ENCODE measurements at regions of chr1 and their contacts with region 1.

Region 1: GRCh38 chr1:150760013-150760412 is 5.6 kb downstream of the CTSS start:
- DNase-seq: peak; percentile 55
- ATAC-seq: peak; percentile 60
- H3K4me3 ChIP-seq: peak overlapping the region in 1 of 5 experiments; percentile 6
- H3K4me3 Mint-ChIP-seq: peak overlapping the region; percentile 59
- H3K27ac ChIP-seq: peak overlapping the region in 1 of 2 donors; percentile 77
- H3K27ac Mint-ChIP-seq: peak overlapping the region; percentile 64
- H3K4me1 ChIP-seq: peaks cover 38 to 43% of the 10 kb centered on the region in 2 donors
- H3K4me1 Mint-ChIP-seq: peaks cover 43% of the 10 kb centered on the region
- H3K27me3 ChIP-seq: no peaks in the 10 kb centered on the region
- H3K27me3 Mint-ChIP-seq: no peaks in the 10 kb centered on the region
- CTCF ChIP-seq: no peak

Region 2: GRCh38 chr1:150718225-150718891 is 41.7 kb before region 1 on chr1:
- CTCF ChIA-PET with region 1: no interaction called
- POLR2A ChIA-PET with region 1: no interaction called
- intact Hi-C with region 1: no loop called
- DNase-seq: no peak
- ATAC-seq: no peak
- H3K4me3 ChIP-seq: no peak overlapping the region
- H3K4me3 Mint-ChIP-seq: no peak overlapping the region
- H3K27ac ChIP-seq: no peak overlapping the region
- H3K27ac Mint-ChIP-seq: no peak overlapping the region
- H3K4me1 ChIP-seq: no peaks in the 10 kb centered on the region
- H3K4me1 Mint-ChIP-seq: no peaks in the 10 kb centered on the region
- H3K27me3 ChIP-seq: no peaks in the 10 kb centered on the region
- H3K27me3 Mint-ChIP-seq: no peaks in the 10 kb centered on the region
- CTCF ChIP-seq: no peak

Region 3: GRCh38 chr1:150798525-150798924 is 38.5 kb after region 1 on chr1:
- CTCF ChIA-PET with region 1: no interaction called
- POLR2A ChIA-PET with region 1: no interaction called
- intact Hi-C with region 1: no loop called
- DNase-seq: no peak
- ATAC-seq: no peak
- H3K4me3 ChIP-seq: no peak overlapping the region
- H3K4me3 Mint-ChIP-seq: no peak overlapping the region
- H3K27ac ChIP-seq: no peak overlapping the region
- H3K27ac Mint-ChIP-seq: no peak overlapping the region
- H3K4me1 ChIP-seq: no peaks in the 10 kb centered on the region
- H3K4me1 Mint-ChIP-seq: no peaks in the 10 kb centered on the region
- H3K27me3 ChIP-seq: no peaks in the 10 kb centered on the region
- H3K27me3 Mint-ChIP-seq: no peaks in the 10 kb centered on the region
- CTCF ChIP-seq: no peak

Region 4: DNA sequence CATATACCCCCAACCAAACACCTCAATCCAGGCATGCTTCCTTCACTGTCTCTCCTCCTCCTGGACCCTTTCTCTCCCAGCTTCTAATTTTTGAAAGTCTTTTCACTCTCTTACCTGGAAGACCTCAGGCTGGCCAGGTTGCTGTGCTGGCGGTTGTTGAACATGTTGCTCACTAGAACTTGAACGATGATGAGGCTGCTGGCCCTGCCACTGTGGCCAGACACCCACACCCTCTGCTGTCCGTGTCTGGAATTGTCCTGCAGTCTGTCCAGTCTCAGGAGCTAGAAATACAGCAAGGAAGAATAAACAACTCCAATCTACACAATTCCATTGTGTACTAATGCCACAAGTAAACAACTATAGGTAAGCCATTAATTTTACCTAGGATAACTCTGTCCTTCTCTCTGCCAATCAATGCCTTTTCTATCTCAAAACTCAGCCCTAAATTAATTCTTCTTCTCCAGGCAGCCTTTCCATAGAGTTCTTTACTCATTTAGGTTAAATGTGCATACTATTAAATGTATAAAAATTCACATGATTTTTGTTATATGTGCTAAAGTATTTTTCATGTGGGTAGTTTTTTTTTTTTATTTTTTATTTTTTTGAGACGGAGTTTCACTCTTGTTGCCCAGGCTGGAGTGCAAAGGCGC is 53.2 kb after region 1 on chr1:
- CTCF ChIA-PET with region 1: interaction called, 13 read pairs
- POLR2A ChIA-PET with region 1: no interaction called
- intact Hi-C with region 1: loop called (anchors 5 kb)
- DNase-seq: peak; percentile 30
- ATAC-seq: no peak
- H3K4me3 ChIP-seq: no peak overlapping the region
- H3K4me3 Mint-ChIP-seq: no peak overlapping the region
- H3K27ac ChIP-seq: peak overlapping the region in 1 of 2 donors; percentile 11
- H3K27ac Mint-ChIP-seq: no peak overlapping the region
- H3K4me1 ChIP-seq: no peaks in the 10 kb centered on the region
- H3K4me1 Mint-ChIP-seq: peaks cover 1% of the 10 kb centered on the region
- H3K27me3 ChIP-seq: no peaks in the 10 kb centered on the region
- H3K27me3 Mint-ChIP-seq: no peaks in the 10 kb centered on the region
- CTCF ChIP-seq: no peak

Region 5: DNA sequence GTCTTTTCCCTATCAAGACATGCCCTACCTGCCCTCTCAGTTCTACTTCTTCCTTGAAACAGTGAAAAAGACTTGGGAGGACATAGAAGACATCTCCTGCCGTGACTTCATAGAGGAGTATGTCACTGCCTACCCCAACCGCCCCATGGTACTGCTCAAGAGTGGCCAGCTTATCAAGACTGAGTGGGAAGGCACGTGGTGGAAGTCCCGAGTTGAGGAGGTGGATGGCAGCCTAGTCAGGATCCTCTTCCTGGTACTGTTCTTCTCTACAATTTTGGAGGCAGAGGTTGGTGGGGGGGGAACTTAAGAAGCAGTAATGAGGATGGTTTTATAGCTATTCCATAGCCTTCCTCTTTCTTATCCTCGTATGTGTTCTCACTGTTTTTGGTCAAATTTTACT is 184.8 kb after region 1 on chr1:
- CTCF ChIA-PET with region 1: interaction called, 5 read pairs
- POLR2A ChIA-PET with region 1: interaction called, 10 read pairs
- intact Hi-C with region 1: no loop called
- DNase-seq: no peak
- ATAC-seq: no peak
- H3K4me3 ChIP-seq: no peak overlapping the region
- H3K4me3 Mint-ChIP-seq: no peak overlapping the region
- H3K27ac ChIP-seq: no peak overlapping the region
- H3K27ac Mint-ChIP-seq: no peak overlapping the region
- H3K4me1 ChIP-seq: no peaks in the 10 kb centered on the region
- H3K4me1 Mint-ChIP-seq: no peaks in the 10 kb centered on the region
- H3K27me3 ChIP-seq: no peaks in the 10 kb centered on the region
- H3K27me3 Mint-ChIP-seq: no peaks in the 10 kb centered on the region
- CTCF ChIP-seq: no peak

Measured in B cell (primary cell).